ENCODE measurements at regions of chrX and their contacts with region 1.

Region 1: GRCh38 chrX:69362856-69363255 is 141.3 kb upstream of the NALF2 start:
- DNase-seq: no peak
- H3K4me3 ChIP-seq: no peak overlapping the region
- H3K27ac ChIP-seq: no peak overlapping the region
- H3K4me1 ChIP-seq: no peaks in the 10 kb centered on the region
- H3K27me3 ChIP-seq: no peaks in the 10 kb centered on the region
- CTCF ChIP-seq: no peak
- POLR2A ChIP-seq: no peak

Region 2: DNA sequence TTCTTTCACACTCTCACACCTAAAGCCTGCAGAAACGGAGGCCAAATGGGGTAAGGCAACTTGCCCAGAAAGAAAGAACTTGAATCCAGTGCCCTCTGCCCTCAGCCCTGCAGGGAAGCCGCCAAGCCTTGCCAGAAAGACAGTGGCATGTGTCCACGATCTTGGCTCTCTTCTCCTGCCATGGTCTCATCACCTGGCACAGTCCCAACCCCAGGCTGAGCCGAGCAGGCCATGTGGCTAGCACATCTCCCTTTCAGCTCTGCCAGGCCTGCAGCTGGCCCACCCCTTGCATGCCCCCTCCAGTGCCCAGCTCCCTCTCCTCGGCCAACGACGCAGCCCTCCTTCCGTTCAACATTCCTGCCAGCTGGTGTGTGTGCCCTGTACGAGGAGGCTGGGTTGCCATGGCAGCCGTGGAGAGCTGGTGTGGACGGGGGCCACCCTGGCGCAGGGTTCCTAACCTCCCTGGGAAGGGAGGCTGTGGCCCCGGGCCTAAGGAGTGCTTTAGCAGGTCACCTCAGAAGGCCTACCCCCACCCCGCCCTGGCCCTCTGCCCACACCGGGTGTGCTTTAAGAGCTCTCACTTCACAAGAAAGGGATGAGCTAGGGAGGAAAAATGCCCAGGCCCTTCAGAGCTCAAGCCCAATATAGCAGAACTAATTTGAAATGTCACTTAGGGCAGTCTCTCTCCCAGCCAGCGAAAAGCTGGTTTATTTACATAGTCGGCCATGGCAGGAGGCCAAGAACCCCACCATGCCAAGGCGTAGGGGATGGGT is 124.6 kb before region 1 on chrX:
- intact Hi-C with region 1: no loop called
- DNase-seq: no peak
- H3K4me3 ChIP-seq: no peak overlapping the region
- H3K27ac ChIP-seq: no peak overlapping the region
- H3K4me1 ChIP-seq: no peaks in the 10 kb centered on the region
- H3K27me3 ChIP-seq: no peaks in the 10 kb centered on the region
- CTCF ChIP-seq: no peak
- POLR2A ChIP-seq: no peak

Region 3: DNA sequence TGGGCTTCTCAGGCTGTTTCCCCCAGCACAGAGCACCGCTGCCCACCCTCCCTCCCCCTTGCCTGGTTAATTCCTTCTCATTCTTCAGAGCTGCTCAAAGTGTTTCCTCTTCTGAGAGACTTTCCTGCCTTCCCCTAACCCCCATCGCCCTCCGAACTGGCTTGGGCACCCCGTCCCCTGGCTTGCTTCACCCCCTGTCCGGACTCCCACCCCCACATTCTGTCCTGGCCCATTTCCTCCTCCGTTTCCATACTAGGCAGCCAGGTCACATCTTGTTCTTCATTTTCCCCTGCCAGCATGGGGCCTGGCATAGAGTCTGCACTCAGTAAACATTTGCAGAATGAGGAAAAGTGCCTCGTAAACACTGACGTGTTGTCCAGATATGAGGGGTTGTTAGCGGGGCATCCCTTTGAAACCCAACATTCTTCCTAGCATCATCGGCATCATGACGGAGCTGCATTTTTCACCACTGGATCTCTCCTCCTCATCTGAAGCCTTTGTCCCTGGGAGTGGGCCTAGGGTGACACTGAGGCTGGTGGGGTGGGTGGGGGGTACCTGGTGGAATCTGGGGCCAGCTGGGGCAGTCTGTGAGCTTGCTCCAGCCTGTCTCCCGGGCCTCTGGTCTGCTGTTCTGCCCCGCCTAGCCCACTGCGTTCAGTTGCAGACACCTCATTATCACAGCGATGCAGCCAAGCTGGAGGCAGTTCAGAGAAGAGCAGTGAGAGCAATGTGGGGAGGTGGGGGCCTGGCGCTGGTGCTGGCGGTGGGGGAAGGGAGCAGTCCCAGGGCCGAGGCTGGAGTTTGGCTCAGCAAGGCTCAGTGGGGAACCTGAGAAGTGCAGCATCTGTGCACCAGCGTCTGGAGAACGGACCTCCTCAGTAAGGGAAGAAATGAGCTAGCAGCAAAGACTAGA is 48.2 kb before region 1 on chrX:
- intact Hi-C with region 1: loop called (anchors 10 kb)
- DNase-seq: peak; percentile 40
- H3K4me3 ChIP-seq: no peak overlapping the region
- H3K27ac ChIP-seq: no peak overlapping the region
- H3K4me1 ChIP-seq: no peaks in the 10 kb centered on the region
- H3K27me3 ChIP-seq: no peaks in the 10 kb centered on the region
- CTCF ChIP-seq: no peak
- POLR2A ChIP-seq: no peak

Measured in prostate gland (tissue), 2 donors.